ENCODE measurements at regions of chr12 and their contacts with region 1.

Region 1: GRCh38 chr12:113965951-113966797 is at the start of gene RBM19:
- DNase-seq: peak; percentile 98
- ATAC-seq: peak; percentile 99
- H3K4me3 Mint-ChIP-seq: peak within 1 kb of the TSS; percentile 100
- H3K27ac Mint-ChIP-seq: peak within 1 kb of the TSS; percentile 100
- H3K4me1 Mint-ChIP-seq: peaks cover 28% of the 10 kb centered on the region
- H3K27me3 Mint-ChIP-seq: peaks cover 11% of the 10 kb centered on the region
- CTCF ChIP-seq: peak; percentile 67
- total RNA-seq, gene RBM19: 41.2 to 60.1 TPM (median 42.0 TPM) in 3 replicates

Region 2: DNA sequence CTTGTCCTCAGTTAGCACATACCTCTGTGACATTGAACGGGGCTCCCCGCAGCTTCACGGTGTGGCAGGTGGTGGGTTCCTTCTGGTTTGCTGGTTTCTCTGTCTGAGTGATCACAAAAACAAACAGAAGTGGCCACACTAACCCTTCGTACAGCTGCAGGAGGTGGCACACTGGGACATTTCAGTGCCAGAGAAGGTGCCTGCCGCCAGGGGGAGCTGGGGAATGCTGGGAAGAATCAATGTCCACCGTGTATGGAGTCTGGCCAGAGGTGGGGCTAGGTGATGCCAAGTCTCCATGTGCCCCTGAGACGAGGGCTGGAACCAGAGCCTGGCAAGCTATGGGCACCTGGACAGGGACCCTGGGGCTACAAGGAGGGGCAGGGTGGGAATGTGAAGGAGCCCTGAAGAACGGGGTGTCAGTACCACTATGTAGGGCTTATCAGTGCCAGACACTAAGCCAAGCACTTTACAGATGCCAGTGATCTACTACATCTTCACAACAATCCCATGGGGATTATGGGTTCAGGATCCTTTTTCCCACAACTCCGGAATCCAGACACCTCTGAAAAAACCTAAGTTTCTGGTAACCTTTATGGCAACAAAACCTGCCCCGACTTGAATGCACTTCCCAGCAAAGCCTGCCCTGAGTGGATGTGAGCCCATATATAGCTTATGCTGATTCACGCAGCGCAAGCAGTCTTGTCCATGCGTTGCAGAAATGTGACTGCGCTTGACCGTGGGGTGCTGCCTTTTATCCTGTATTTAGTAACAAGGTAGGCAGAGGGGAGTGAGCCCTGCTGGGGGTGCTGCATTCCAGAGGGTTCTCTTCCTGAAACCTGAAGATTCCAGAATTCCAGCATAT is 10.8 kb before region 1 on chr12:
- CTCF ChIA-PET with region 1: interaction called, 13 read pairs
- POLR2A ChIA-PET with region 1: no interaction called
- DNase-seq: peak; percentile 72
- ATAC-seq: peak; percentile 94
- H3K4me3 Mint-ChIP-seq: no peak overlapping the region
- H3K27ac Mint-ChIP-seq: no peak overlapping the region
- H3K4me1 Mint-ChIP-seq: no peaks in the 10 kb centered on the region
- H3K27me3 Mint-ChIP-seq: no peaks in the 10 kb centered on the region
- CTCF ChIP-seq: peak; percentile 54; the same call in 1 of the 2 replicates

Region 3: GRCh38 chr12:113996026-113996425 is 29.9 kb after region 1 on chr12:
- CTCF ChIA-PET with region 1: interaction called, 13 read pairs
- POLR2A ChIA-PET with region 1: no interaction called
- DNase-seq: peak; percentile 62
- ATAC-seq: peak; percentile 100
- H3K4me3 Mint-ChIP-seq: no peak overlapping the region
- H3K27ac Mint-ChIP-seq: no peak overlapping the region
- H3K4me1 Mint-ChIP-seq: peaks cover 5% of the 10 kb centered on the region; the same call in 1 of the 2 replicates
- H3K27me3 Mint-ChIP-seq: peaks cover 18% of the 10 kb centered on the region
- CTCF ChIP-seq: no peak

Measured in WTC11 (cell line).